CD4-positive, alpha-beta memory T cell (primary cell): ENCODE measurements at regions of chr5 and their contacts with region 1.

Region 1: DNA sequence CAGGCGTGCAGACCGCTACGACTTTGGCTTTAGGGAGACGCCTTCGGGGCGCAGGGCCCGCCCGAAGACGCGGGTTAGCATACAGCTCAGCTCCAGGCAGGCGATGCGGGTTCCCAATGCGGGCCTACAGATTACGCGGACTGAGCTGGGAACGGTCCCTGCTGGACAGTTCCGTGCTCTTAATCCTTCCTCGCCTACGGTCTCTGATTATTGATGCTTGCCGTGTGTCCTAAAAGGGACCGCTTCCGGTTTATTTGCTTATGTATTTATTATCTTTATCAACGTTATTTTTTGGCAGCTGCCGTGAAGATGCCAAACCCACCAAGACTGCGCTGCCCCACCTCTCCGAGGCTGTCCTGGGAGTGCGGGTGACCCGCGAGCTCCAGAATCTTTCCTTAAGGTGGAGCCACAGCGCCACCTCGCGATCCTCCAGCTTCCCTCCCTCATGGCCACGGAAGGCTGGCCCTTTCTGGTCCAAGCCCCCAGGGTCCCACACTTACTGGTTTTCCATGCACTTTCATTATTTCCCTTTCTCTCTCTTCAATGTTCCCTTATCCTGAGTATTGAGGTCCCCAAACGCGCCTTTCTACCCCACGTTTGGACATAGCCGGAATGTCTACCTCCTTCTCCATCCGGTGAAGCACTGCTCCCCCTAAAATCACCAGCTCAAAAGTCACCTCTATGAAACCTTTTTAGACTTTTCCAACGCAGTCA is 7.0 kb upstream of the EBF1 start:
- DNase-seq: peak; percentile 55 to 61 (median 59)
- H3K4me3 ChIP-seq: peak overlapping the region; percentile 31 to 42
- H3K4me3 Mint-ChIP-seq: peak overlapping the region; percentile 61 to 93 (median 86)
- H3K27ac ChIP-seq: no peak overlapping the region
- H3K27ac Mint-ChIP-seq: peak overlapping the region in 5 of 7 donors; percentile 6 to 83 (median 61)
- H3K4me1 ChIP-seq: peaks cover 21% of the 10 kb centered on the region
- H3K4me1 Mint-ChIP-seq: peaks cover 18 to 32% (median 22%) of the 10 kb centered on the region in 4 donors
- H3K27me3 ChIP-seq: peaks cover 30% of the 10 kb centered on the region
- H3K27me3 Mint-ChIP-seq: peaks cover 47 to 55% of the 10 kb centered on the region in 2 donors

Region 2: GRCh38 chr5:157761690-157762621 is 1344.8 kb before region 1 on chr5:
- CTCF ChIA-PET with region 1: interaction called, 4 read pairs
- POLR2A ChIA-PET with region 1: no interaction called
- intact Hi-C with region 1: loop called (anchors 2 kb)
- DNase-seq: peak in 4 of 5 donors; percentile 29 to 46 (median 41)
- H3K4me3 ChIP-seq: no peak overlapping the region
- H3K4me3 Mint-ChIP-seq: no peak overlapping the region
- H3K27ac ChIP-seq: no peak overlapping the region
- H3K27ac Mint-ChIP-seq: no peak overlapping the region
- H3K4me1 ChIP-seq: peaks cover 5% of the 10 kb centered on the region
- H3K4me1 Mint-ChIP-seq: peaks cover 0 to 4% (median 0%) of the 10 kb centered on the region in 4 donors
- H3K27me3 ChIP-seq: no peaks in the 10 kb centered on the region
- H3K27me3 Mint-ChIP-seq: no peaks in the 10 kb centered on the region

Region 3: GRCh38 chr5:158074992-158075769 is 1031.5 kb before region 1 on chr5:
- CTCF ChIA-PET with region 1: interaction called, 24 read pairs
- POLR2A ChIA-PET with region 1: no interaction called
- intact Hi-C with region 1: loop called (anchors 1 kb)
- DNase-seq: peak in 4 of 5 donors; percentile 41 to 47 (median 46)
- H3K4me3 ChIP-seq: no peak overlapping the region
- H3K4me3 Mint-ChIP-seq: peak overlapping the region in 1 of 8 donors; percentile 29
- H3K27ac ChIP-seq: no peak overlapping the region
- H3K27ac Mint-ChIP-seq: peak overlapping the region in 4 of 7 donors; percentile 1 to 78 (median 44)
- H3K4me1 ChIP-seq: peaks cover 4% of the 10 kb centered on the region
- H3K4me1 Mint-ChIP-seq: peaks cover 0 to 5% (median 4%) of the 10 kb centered on the region in 4 donors
- H3K27me3 ChIP-seq: no peaks in the 10 kb centered on the region
- H3K27me3 Mint-ChIP-seq: peaks cover 0 to 7% of the 10 kb centered on the region in 2 donors

Region 4: DNA sequence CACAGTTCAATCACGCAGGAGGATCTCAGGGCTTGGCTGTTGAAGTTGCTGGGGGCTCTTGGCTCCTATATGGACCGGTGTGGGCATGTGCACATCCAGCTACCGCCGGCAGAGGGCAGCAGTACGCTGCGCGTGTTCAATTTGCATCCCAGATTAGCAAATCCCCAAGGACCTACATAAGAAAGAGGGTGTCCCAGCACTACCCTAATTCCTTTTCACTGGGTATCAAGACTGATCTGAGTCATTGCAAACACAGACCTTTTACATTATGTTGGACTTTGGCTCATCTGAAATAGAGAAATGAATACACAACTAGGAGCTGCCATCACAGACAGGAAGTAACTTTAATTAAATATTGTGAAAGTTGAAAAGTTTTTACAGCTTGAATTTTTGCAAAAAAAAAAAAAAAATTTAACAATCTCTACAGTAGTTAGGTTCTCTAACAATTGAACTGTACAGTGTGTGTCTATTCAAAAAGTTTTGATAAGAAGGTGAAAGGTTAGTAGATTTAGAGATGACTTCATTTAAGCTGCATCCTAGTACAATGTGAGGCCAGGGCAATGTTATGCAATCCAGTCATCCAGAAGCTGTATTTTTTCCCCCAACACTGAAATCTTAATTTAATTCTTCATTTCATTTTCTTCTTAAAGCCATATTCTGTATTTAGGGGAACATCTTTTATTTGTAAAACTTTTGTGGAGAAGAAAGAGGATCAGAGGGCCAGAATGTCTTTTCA is 411.0 kb before region 1 on chr5:
- CTCF ChIA-PET with region 1: interaction called, 406 read pairs
- POLR2A ChIA-PET with region 1: interaction called, 20 read pairs
- intact Hi-C with region 1: loop called (anchors 1 kb)
- DNase-seq: peak; percentile 51 to 66 (median 55)
- H3K4me3 ChIP-seq: no peak overlapping the region
- H3K4me3 Mint-ChIP-seq: peak overlapping the region in 3 of 8 donors; percentile 1 to 20 (median 6)
- H3K27ac ChIP-seq: no peak overlapping the region
- H3K27ac Mint-ChIP-seq: no peak overlapping the region
- H3K4me1 ChIP-seq: no peaks in the 10 kb centered on the region
- H3K4me1 Mint-ChIP-seq: peaks cover 3 to 5% (median 4%) of the 10 kb centered on the region in 4 donors
- H3K27me3 ChIP-seq: no peaks in the 10 kb centered on the region
- H3K27me3 Mint-ChIP-seq: peaks cover 8 to 11% of the 10 kb centered on the region in 2 donors

Region 5: DNA sequence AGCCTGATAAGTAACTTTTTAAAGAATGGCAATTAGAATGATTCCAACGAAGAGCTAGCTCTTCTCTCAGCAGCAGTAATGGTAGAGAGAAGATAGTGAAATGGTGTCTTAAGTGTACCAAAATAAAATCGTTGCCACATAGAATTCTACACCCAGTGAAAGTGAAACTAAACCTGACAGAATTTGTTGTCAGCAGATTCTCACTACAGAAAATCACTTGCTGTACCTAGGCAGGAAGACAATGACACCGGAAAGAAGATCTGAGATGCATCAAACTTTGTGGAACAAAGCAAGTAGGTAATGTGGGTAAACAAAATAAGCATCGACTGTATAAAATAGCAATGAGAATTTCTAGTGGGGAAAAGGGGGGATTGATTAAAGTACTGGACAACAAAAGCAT is 13.7 kb after region 1 on chr5:
- CTCF ChIA-PET with region 1: interaction called, 19 read pairs
- POLR2A ChIA-PET with region 1: interaction called, 6 read pairs
- intact Hi-C with region 1: no loop called
- DNase-seq: peak in 4 of 5 donors; percentile 52 to 68 (median 60)
- H3K4me3 ChIP-seq: peak overlapping the region in 1 of 2 donors; percentile 29
- H3K4me3 Mint-ChIP-seq: peak overlapping the region; percentile 61 to 89 (median 77)
- H3K27ac ChIP-seq: peak overlapping the region; percentile 30
- H3K27ac Mint-ChIP-seq: peak overlapping the region; percentile 75 to 96 (median 90)
- H3K4me1 ChIP-seq: peaks cover 16% of the 10 kb centered on the region
- H3K4me1 Mint-ChIP-seq: peaks cover 16 to 23% (median 20%) of the 10 kb centered on the region in 4 donors
- H3K27me3 ChIP-seq: no peaks in the 10 kb centered on the region
- H3K27me3 Mint-ChIP-seq: no peaks in the 10 kb centered on the region